OCI-LY7 (cell line): ENCODE measurements at regions of chr14 and their contacts with region 1.

Region 1: DNA sequence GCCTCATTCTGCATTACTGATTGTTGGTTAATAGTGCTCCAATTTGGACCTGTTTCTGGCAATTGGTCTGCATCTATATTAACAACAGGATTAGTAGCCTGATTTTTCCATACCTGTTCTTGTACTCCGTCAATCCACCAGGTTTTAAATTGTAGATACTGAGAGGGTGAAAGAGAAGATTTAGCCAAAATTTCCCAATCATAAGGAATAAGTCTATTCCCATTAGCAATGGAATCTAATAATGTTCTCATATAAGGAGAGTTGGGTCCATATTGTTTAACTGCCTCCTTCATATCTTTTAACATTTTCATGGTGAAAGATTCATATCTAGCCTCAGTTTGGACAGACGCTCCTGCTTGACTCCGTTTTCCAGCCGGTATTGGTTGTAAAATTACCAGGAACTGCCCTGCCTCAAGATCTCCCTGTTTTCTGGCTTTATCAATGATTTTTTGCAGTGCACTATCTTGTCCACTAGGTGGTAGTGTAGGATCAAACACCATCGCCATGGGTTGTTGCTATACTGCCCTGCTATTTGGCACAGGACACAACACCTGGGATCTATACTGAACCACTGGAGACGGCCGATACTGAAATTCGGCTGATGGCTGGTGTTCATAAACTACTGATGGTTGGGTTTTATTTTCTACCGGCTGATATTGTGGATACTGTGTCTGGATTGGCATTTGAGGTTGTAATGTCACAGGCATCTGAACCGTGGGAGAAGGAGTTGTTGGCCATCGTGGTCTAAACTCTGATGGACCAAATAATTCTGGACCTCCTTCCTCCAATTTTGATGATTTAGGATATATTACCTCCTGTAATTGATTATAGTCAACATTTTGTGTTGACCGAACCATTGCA is 25.2 kb downstream of the DHRS4L2 start:
- DNase-seq: peak; percentile 82
- H3K4me3 ChIP-seq: no peak overlapping the region
- H3K27ac ChIP-seq: no peak overlapping the region
- H3K4me1 ChIP-seq: peaks cover 12% of the 10 kb centered on the region
- CTCF ChIP-seq: peak; percentile 90

Region 2: DNA sequence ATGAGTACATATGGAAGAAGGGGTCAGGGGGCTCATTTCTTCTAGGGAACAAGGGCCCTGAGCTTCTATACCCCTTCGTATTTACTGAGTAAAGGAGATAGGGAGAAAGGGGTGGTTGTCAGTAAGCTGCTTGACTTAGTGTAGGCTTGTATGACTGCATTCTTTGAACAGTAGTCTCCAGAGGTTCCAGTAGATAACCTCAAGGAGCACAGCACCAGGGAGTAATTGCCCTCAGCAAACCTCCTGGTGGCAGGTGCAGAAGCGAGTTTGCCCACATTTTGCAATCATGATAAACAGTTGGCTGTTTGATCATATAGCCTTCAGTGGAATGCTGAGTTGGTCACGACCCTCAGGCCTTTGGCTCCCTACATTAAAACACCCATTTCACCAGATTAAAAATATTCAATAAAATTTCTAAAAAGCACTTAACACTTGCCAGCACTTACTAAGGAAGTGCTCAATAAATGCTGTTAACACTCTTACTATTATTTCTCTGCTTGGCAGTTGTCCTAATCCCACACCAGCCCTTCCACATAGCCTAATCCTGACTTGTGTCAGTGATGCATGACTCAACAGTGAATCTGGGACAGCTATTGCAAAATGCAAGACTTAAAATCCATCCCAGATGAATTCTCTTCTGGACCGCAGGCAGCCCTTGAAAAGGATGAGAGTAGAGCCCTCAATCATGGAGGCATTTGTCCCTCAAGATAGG is 28.8 kb before region 1 on chr14:
- CTCF ChIA-PET with region 1: no interaction called
- POLR2A ChIA-PET with region 1: no interaction called
- intact Hi-C with region 1: no loop called
- DNase-seq: no peak
- H3K4me3 ChIP-seq: no peak overlapping the region
- H3K27ac ChIP-seq: no peak overlapping the region
- H3K4me1 ChIP-seq: peaks cover 17% of the 10 kb centered on the region
- CTCF ChIP-seq: no peak

Region 3: DNA sequence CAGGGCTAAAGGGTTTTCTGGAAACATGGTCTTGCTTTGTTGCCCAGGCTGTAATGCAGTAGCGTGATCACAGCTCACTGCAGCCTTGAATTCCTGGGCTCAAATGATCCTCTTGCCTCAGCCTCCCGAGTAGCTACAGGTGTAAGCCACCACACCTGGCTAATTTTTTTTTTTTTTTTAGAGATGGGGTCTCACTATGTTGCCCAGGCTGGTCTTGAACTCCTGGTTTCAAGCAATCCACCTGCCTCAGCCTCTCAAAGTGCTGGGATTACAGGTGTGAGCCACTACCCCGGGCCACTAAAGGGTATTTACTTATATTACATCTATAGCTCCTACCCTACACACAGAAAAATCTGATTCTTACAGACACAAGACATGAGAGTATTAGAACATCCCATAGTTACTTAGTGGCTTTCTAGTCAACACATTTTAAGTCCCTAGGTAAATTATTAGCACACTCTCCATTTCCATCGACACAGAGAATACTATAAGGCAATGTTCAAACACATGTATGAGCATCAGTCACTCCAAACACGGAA is 94.5 kb after region 1 on chr14:
- CTCF ChIA-PET with region 1: interaction called, 3 read pairs
- POLR2A ChIA-PET with region 1: interaction called, 4 read pairs
- intact Hi-C with region 1: loop called (anchors 1 kb)
- DNase-seq: no peak
- H3K4me3 ChIP-seq: no peak overlapping the region
- H3K27ac ChIP-seq: peak overlapping the region; percentile 55
- H3K4me1 ChIP-seq: peaks cover 15% of the 10 kb centered on the region
- CTCF ChIP-seq: no peak

Region 4: GRCh38 chr14:24123508-24124417 is 109.9 kb after region 1 on chr14:
- CTCF ChIA-PET with region 1: no interaction called
- POLR2A ChIA-PET with region 1: no interaction called
- intact Hi-C with region 1: no loop called
- DNase-seq: no peak
- H3K4me3 ChIP-seq: no peak overlapping the region
- H3K27ac ChIP-seq: no peak overlapping the region
- H3K4me1 ChIP-seq: peaks cover 14% of the 10 kb centered on the region
- CTCF ChIP-seq: no peak

Region 5: GRCh38 chr14:24215495-24216344 is 201.8 kb after region 1 on chr14 and contains the start of gene MDP1:
- CTCF ChIA-PET with region 1: no interaction called
- POLR2A ChIA-PET with region 1: no interaction called
- intact Hi-C with region 1: no loop called
- DNase-seq: peak; percentile 93
- H3K4me3 ChIP-seq: peak within 1 kb of the TSS; percentile 76
- H3K27ac ChIP-seq: peak within 1 kb of the TSS; percentile 70
- H3K4me1 ChIP-seq: peaks cover 28% of the 10 kb centered on the region
- CTCF ChIP-seq: peak; percentile 85
- total RNA-seq, gene MDP1: 21.5 and 23.2 TPM in 2 replicates

Region 6: GRCh38 chr14:24259252-24259995 is 245.5 kb after region 1 on chr14:
- CTCF ChIA-PET with region 1: no interaction called
- POLR2A ChIA-PET with region 1: no interaction called
- intact Hi-C with region 1: no loop called
- DNase-seq: no peak
- H3K4me3 ChIP-seq: no peak overlapping the region
- H3K27ac ChIP-seq: no peak overlapping the region
- H3K4me1 ChIP-seq: peaks cover 9% of the 10 kb centered on the region
- CTCF ChIP-seq: no peak

Region 7: GRCh38 chr14:24299255-24300195 is 285.6 kb after region 1 on chr14 and contains the starts of genes DHRS1 and NOP9:
- CTCF ChIA-PET with region 1: no interaction called
- POLR2A ChIA-PET with region 1: no interaction called
- intact Hi-C with region 1: loop called (anchors 5 kb)
- DNase-seq: peak; percentile 94
- H3K4me3 ChIP-seq: peak within 1 kb of the TSS; percentile 99
- H3K27ac ChIP-seq: peak within 1 kb of the TSS; percentile 38
- H3K4me1 ChIP-seq: peaks cover 30% of the 10 kb centered on the region
- CTCF ChIP-seq: no peak
- total RNA-seq, gene DHRS1: 21.0 and 27.4 TPM in 2 replicates
- total RNA-seq, gene NOP9: 30.6 and 33.2 TPM in 2 replicates